Activated CD4-positive, alpha-beta T cell treated with anti-CD3 and anti-CD28 coated beads for 36 hours (primary cell): ENCODE measurements at regions of chr14 and their contacts with region 1.

Region 1: GRCh38 chr14:77053046-77053841 is 24.7 kb upstream of the IRF2BPL start:
- DNase-seq: peak; percentile 90
- ATAC-seq: peak; percentile 86
- H3K4me3 Mint-ChIP-seq: no peak overlapping the region
- H3K27ac Mint-ChIP-seq: peak overlapping the region; percentile 78
- H3K4me1 Mint-ChIP-seq: peaks cover 18% of the 10 kb centered on the region
- H3K27me3 Mint-ChIP-seq: no peaks in the 10 kb centered on the region

Region 2: DNA sequence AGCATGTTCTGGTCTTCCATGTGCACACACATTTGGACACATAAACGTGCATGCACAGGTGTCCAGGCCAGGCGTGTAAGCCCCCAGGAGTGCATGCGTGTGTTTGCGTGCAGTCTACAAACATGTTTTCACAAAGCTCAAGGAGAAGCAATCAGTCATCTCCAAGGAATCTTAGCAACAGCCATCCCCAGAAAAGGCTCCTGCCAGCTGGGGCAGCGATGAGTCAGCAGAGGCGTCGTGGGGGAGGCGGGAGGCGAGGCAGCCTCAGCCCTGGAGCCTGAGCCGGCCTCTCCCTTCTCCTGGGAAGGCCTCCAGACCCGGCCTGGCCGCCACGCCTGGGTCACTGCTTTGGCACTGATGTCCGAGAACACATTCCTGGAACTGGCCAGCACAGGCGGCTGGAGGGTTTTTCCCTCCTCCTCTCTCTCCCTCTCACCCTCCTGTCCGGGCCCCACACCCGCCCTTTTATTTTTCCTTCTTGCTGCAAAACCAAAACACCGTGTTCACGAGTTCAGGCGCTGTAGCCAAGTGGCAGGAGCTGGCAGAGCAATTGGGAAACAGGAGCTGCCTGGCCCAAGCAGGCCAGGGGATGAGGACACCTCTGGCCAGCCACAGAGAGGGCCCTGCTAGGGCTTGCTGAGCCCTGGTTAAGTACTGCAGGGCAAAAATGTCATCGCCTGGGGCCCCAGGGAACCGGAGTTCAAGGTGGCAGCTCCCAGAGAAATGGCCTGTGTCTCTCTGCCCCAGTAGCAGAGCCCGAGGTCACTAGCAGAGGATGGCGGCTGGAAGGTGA is 134.3 kb before region 1 on chr14:
- CTCF ChIA-PET with region 1: interaction called, 58 read pairs
- POLR2A ChIA-PET with region 1: no interaction called
- intact Hi-C with region 1: no loop called
- DNase-seq: peak; percentile 65
- ATAC-seq: no peak
- H3K4me3 Mint-ChIP-seq: no peak overlapping the region
- H3K27ac Mint-ChIP-seq: no peak overlapping the region
- H3K4me1 Mint-ChIP-seq: peaks cover 59% of the 10 kb centered on the region
- H3K27me3 Mint-ChIP-seq: no peaks in the 10 kb centered on the region

Region 3: GRCh38 chr14:76962303-76962660 is 91.0 kb before region 1 on chr14:
- CTCF ChIA-PET with region 1: interaction called, 10 read pairs
- POLR2A ChIA-PET with region 1: no interaction called
- intact Hi-C with region 1: no loop called
- DNase-seq: no peak
- ATAC-seq: peak; percentile 15
- H3K4me3 Mint-ChIP-seq: peak overlapping the region; percentile 62
- H3K27ac Mint-ChIP-seq: peak overlapping the region; percentile 99
- H3K4me1 Mint-ChIP-seq: peaks cover 86% of the 10 kb centered on the region
- H3K27me3 Mint-ChIP-seq: no peaks in the 10 kb centered on the region

Region 4: GRCh38 chr14:77033622-77034521 is 19.4 kb before region 1 on chr14:
- CTCF ChIA-PET with region 1: interaction called, 10 read pairs
- POLR2A ChIA-PET with region 1: no interaction called
- intact Hi-C with region 1: no loop called
- DNase-seq: peak; percentile 94
- ATAC-seq: peak; percentile 77
- H3K4me3 Mint-ChIP-seq: peak overlapping the region; percentile 89
- H3K27ac Mint-ChIP-seq: peak overlapping the region; percentile 97
- H3K4me1 Mint-ChIP-seq: peaks cover 76% of the 10 kb centered on the region
- H3K27me3 Mint-ChIP-seq: no peaks in the 10 kb centered on the region